Ascending aorta (tissue), 2 donors: ENCODE measurements at regions of chr5 and their contacts with region 1.

Region 1: GRCh38 chr5:167785101-167785500 is 506.3 kb upstream of the WWC1 start:
- DNase-seq: no peak
- H3K4me3 ChIP-seq: no peak overlapping the region
- H3K27ac ChIP-seq: no peak overlapping the region
- H3K4me1 ChIP-seq: peaks cover 0 to 2% of the 10 kb centered on the region in 2 donors
- H3K27me3 ChIP-seq: no peaks in the 10 kb centered on the region
- CTCF ChIP-seq: no peak

Region 2: DNA sequence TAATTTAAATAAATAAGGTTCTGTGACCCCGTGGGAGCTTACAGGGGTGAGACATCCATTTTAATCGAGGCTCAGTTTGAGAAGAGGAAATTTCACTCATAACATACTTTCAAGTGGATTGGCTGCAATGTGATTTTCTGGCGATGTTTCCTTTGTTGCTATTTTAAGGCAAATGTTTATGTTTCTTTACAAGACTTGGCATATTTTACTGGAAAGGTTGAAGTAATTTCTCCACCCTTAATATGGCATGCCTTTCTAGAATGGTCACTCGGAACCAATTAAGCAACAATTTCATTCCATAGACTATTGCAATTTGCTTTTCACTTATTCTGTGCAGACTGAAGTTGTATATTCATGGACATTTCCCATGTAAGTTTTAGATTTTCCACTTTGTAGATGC is 68.3 kb after region 1 on chr5:
- intact Hi-C with region 1: loop called (anchors 5 kb)
- DNase-seq: no peak
- H3K4me3 ChIP-seq: no peak overlapping the region
- H3K27ac ChIP-seq: peak overlapping the region in 1 of 2 donors; percentile 19
- H3K4me1 ChIP-seq: no peaks in the 10 kb centered on the region
- H3K27me3 ChIP-seq: no peaks in the 10 kb centered on the region
- CTCF ChIP-seq: no peak